Naive thymus-derived CD4-positive, alpha-beta T cell (primary cell): ENCODE measurements at regions of chr3 and their contacts with region 1.

Region 1: DNA sequence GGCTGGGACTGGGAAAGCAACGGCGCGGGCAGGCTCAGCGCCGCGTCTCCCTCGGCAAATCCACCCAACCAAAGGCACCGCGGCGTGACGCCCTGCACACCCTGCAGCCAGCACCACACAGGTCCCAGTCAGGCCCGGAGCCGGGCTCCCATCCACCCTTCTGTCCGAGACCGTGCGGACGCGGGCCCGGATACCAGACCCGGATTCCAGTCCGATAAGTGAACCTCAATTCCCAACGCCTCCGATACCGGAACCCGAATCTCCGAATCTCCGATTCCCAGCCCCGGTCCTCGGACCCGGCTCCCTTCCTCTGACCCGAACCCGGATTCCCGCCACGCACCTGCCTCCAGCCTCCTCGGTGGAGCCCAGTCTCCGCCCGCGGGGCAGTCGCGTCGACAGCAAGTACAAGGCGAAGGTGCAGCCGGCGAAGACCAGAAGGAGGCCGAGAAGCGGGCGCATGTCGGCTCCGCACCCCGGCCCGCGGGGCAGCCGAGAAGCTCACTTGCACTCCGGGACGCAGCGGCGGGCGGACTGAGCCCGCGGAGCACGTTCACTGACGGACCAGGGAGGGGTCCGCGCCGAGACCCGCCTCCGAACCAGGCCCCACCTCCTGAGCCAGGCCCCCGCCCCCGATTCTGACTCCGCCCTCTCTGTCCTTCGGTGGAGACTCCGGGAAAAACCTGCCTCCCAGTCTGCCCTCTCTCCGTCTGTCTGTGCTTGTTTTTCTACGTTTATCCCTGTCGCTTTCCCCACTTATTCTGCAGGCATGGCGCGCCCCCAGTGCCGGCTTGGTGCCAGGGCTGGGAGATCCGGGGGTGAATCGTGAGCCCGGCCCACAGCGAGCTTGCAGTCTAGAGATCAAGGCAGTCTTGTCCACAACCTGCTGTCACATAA is at the start of gene TMEM41A:
- DNase-seq: peak; percentile 80 to 94 (median 88)
- ATAC-seq: peak; percentile 99
- H3K4me3 ChIP-seq: peak within 1 kb of the TSS; percentile 93
- H3K4me3 Mint-ChIP-seq: peak within 1 kb of the TSS; percentile 87 to 98 (median 96)
- H3K27ac ChIP-seq: peak within 1 kb of the TSS; percentile 76
- H3K27ac Mint-ChIP-seq: peak within 1 kb of the TSS; percentile 87 to 95 (median 90)
- H3K4me1 ChIP-seq: peaks cover 17 to 24% of the 10 kb centered on the region in 2 donors
- H3K4me1 Mint-ChIP-seq: peaks cover 6 to 40% (median 29%) of the 10 kb centered on the region in 7 donors
- H3K27me3 ChIP-seq: no peaks in the 10 kb centered on the region
- H3K27me3 Mint-ChIP-seq: peaks cover 0 to 10% (median 0%) of the 10 kb centered on the region in 5 donors
- total RNA-seq, gene TMEM41A: 23.7 to 30.5 (median 29.1) TPM

Region 2: GRCh38 chr3:184711493-184712247 is 787.1 kb before region 1 on chr3 and contains the start of gene MAGEF1:
- CTCF ChIA-PET with region 1: no interaction called
- POLR2A ChIA-PET with region 1: no interaction called
- intact Hi-C with region 1: loop called in 1 of 2 experiments (anchors 2 kb)
- DNase-seq: peak; percentile 34 to 78 (median 69)
- ATAC-seq: peak; percentile 87
- H3K4me3 ChIP-seq: peak within 1 kb of the TSS; percentile 70
- H3K4me3 Mint-ChIP-seq: peak within 1 kb of the TSS; percentile 81 to 99 (median 93)
- H3K27ac ChIP-seq: peak within 1 kb of the TSS; percentile 77
- H3K27ac Mint-ChIP-seq: peak within 1 kb of the TSS; percentile 69 to 99 (median 87)
- H3K4me1 ChIP-seq: peaks cover 10 to 17% of the 10 kb centered on the region in 2 donors
- H3K4me1 Mint-ChIP-seq: peaks cover 28 to 44% (median 34%) of the 10 kb centered on the region in 7 donors
- H3K27me3 ChIP-seq: no peaks in the 10 kb centered on the region
- H3K27me3 Mint-ChIP-seq: peaks cover 0 to 20% (median 0%) of the 10 kb centered on the region in 5 donors
- total RNA-seq, gene MAGEF1: 9.0 to 17.4 (median 13.3) TPM

Region 3: DNA sequence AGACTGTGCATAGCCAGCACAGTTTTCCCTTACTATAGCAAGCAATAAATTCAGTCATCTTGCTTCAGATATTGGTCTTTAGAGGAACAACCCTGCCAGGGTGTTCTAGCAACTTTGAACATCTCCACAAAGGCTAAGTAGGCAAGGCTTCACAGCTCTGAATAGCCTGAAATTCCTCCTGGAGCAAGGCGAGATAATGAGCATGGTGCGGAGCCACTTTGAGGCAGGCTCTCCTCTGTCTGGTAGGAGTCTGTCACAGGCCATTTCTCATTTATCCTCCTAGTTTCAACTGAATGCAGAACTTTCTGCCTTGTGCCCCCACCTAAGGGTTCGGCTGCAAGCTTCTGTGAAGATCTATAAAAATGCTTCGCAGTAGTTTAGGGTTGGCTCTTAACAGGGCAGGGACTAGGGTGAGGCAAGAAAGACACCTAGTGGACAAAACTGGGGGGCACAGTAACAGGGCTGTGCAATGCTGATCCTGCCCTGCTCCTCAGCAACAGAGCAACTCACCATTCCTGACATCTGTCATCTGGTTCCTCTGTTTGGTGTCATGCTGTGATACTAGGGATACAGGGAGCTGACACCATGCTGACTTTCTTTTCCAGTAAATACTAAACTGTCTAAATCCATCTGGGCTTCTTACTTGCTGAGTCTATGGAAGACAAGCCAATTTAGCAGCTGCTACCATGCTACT is 228.3 kb before region 1 on chr3:
- CTCF ChIA-PET with region 1: no interaction called
- POLR2A ChIA-PET with region 1: no interaction called
- intact Hi-C with region 1: no loop called
- DNase-seq: no peak
- ATAC-seq: peak; percentile 47
- H3K4me3 ChIP-seq: no peak overlapping the region
- H3K4me3 Mint-ChIP-seq: no peak overlapping the region
- H3K27ac ChIP-seq: no peak overlapping the region
- H3K27ac Mint-ChIP-seq: no peak overlapping the region
- H3K4me1 ChIP-seq: no peaks in the 10 kb centered on the region
- H3K4me1 Mint-ChIP-seq: no peaks in the 10 kb centered on the region
- H3K27me3 ChIP-seq: no peaks in the 10 kb centered on the region
- H3K27me3 Mint-ChIP-seq: peaks cover 22 to 66% (median 47%) of the 10 kb centered on the region in 5 donors

Region 4: GRCh38 chr3:185282696-185283394 is 215.9 kb before region 1 on chr3:
- CTCF ChIA-PET with region 1: no interaction called
- POLR2A ChIA-PET with region 1: no interaction called
- intact Hi-C with region 1: loop called (anchors 1 kb)
- DNase-seq: peak; percentile 80 to 95 (median 89)
- ATAC-seq: peak; percentile 99
- H3K4me3 ChIP-seq: peak overlapping the region; percentile 91
- H3K4me3 Mint-ChIP-seq: peak overlapping the region; percentile 89 to 100 (median 94)
- H3K27ac ChIP-seq: peak overlapping the region; percentile 59
- H3K27ac Mint-ChIP-seq: peak overlapping the region; percentile 77 to 98 (median 93)
- H3K4me1 ChIP-seq: peaks cover 5 to 12% of the 10 kb centered on the region in 2 donors
- H3K4me1 Mint-ChIP-seq: peaks cover 15 to 33% (median 19%) of the 10 kb centered on the region in 7 donors
- H3K27me3 ChIP-seq: no peaks in the 10 kb centered on the region
- H3K27me3 Mint-ChIP-seq: peaks cover 9 to 25% (median 21%) of the 10 kb centered on the region in 5 donors

Region 5: DNA sequence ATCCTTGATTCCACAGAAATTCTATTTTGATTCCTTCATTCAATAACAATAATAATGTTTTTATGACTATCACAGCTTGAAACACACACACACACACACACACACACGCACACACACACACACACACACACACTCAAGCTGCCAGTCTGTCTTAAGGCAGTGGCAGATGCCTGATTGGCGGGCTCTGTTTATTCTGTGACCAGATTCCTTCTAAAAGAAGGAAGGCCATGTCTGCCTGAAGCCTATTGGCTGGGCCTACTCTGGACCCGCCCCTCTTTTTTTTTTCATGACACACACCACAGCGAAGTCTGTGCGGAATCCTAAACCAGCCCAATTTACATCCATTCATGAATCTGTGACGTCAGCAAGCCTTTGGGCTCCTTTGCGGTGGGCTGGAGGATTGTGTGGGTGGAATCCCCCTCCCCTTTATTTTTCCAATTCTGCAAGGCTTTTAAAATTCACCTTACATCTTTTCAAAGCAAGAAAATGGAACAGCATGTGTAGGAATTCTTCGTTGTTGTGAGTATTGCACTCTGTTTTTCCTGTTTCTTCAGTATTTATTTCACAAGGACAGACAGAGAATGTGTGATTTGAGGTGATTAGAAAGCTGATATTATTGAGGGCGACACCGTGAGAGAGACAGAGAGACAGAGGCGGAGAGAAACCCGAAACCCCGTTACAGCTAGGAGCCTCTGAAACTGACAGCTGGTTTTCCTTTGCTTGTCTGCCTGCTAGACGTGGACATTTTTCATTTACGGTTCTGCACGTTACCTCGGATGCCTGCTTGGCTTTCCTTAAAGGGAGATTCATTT is 135.7 kb before region 1 on chr3 and contains the start of gene MAP3K13:
- CTCF ChIA-PET with region 1: no interaction called
- POLR2A ChIA-PET with region 1: no interaction called
- intact Hi-C with region 1: loop called in 1 of 2 experiments (anchors 2 kb)
- DNase-seq: peak in 8 of 9 donors; percentile 10 to 42 (median 25)
- ATAC-seq: peak; percentile 96
- H3K4me3 ChIP-seq: peak within 1 kb of the TSS; percentile 58
- H3K4me3 Mint-ChIP-seq: peak within 1 kb of the TSS; percentile 58 to 93 (median 76)
- H3K27ac ChIP-seq: no peak within 1 kb of the TSS
- H3K27ac Mint-ChIP-seq: no peak within 1 kb of the TSS
- H3K4me1 ChIP-seq: peaks cover 3 to 7% of the 10 kb centered on the region in 2 donors
- H3K4me1 Mint-ChIP-seq: peaks cover 11 to 17% (median 16%) of the 10 kb centered on the region in 7 donors
- H3K27me3 ChIP-seq: peaks cover 5 to 8% of the 10 kb centered on the region in 2 donors
- H3K27me3 Mint-ChIP-seq: peaks cover 37 to 75% (median 65%) of the 10 kb centered on the region in 5 donors
- total RNA-seq, gene MAP3K13: 6.2 to 9.7 (median 7.8) TPM

Region 6: GRCh38 chr3:185511711-185512110 is 13.0 kb after region 1 on chr3:
- CTCF ChIA-PET with region 1: no interaction called
- POLR2A ChIA-PET with region 1: no interaction called
- intact Hi-C with region 1: no loop called
- DNase-seq: no peak
- ATAC-seq: no peak
- H3K4me3 ChIP-seq: no peak overlapping the region
- H3K4me3 Mint-ChIP-seq: no peak overlapping the region
- H3K27ac ChIP-seq: no peak overlapping the region
- H3K27ac Mint-ChIP-seq: no peak overlapping the region
- H3K4me1 ChIP-seq: no peaks in the 10 kb centered on the region
- H3K4me1 Mint-ChIP-seq: no peaks in the 10 kb centered on the region
- H3K27me3 ChIP-seq: no peaks in the 10 kb centered on the region
- H3K27me3 Mint-ChIP-seq: peaks cover 0 to 5% (median 0%) of the 10 kb centered on the region in 5 donors

Region 7: GRCh38 chr3:185559706-185560090 is 60.9 kb after region 1 on chr3:
- CTCF ChIA-PET with region 1: no interaction called
- POLR2A ChIA-PET with region 1: interaction called, 3 read pairs
- intact Hi-C with region 1: loop called (anchors 1 kb)
- DNase-seq: no peak
- ATAC-seq: no peak
- H3K4me3 ChIP-seq: no peak overlapping the region
- H3K4me3 Mint-ChIP-seq: peak overlapping the region in 6 of 10 donors; percentile 44 to 86 (median 76)
- H3K27ac ChIP-seq: no peak overlapping the region
- H3K27ac Mint-ChIP-seq: peak overlapping the region in 1 of 9 donors; percentile 85
- H3K4me1 ChIP-seq: peaks cover 0 to 12% of the 10 kb centered on the region in 2 donors
- H3K4me1 Mint-ChIP-seq: peaks cover 7 to 33% (median 18%) of the 10 kb centered on the region in 7 donors
- H3K27me3 ChIP-seq: no peaks in the 10 kb centered on the region
- H3K27me3 Mint-ChIP-seq: peaks cover 0 to 5% (median 2%) of the 10 kb centered on the region in 5 donors

Region 8: GRCh38 chr3:187125319-187126031 is 1626.7 kb after region 1 on chr3:
- CTCF ChIA-PET with region 1: no interaction called
- POLR2A ChIA-PET with region 1: no interaction called
- intact Hi-C with region 1: loop called in 1 of 2 experiments (anchors 10 kb)
- DNase-seq: no peak
- ATAC-seq: no peak
- H3K4me3 ChIP-seq: no peak overlapping the region
- H3K4me3 Mint-ChIP-seq: no peak overlapping the region
- H3K27ac ChIP-seq: no peak overlapping the region
- H3K27ac Mint-ChIP-seq: no peak overlapping the region
- H3K4me1 ChIP-seq: peaks cover 10 to 12% of the 10 kb centered on the region in 2 donors
- H3K4me1 Mint-ChIP-seq: peaks cover 4 to 25% (median 17%) of the 10 kb centered on the region in 7 donors
- H3K27me3 ChIP-seq: no peaks in the 10 kb centered on the region
- H3K27me3 Mint-ChIP-seq: no peaks in the 10 kb centered on the region